ENCODE measurements at regions of chr4 and their contacts with region 1.

Region 1: DNA sequence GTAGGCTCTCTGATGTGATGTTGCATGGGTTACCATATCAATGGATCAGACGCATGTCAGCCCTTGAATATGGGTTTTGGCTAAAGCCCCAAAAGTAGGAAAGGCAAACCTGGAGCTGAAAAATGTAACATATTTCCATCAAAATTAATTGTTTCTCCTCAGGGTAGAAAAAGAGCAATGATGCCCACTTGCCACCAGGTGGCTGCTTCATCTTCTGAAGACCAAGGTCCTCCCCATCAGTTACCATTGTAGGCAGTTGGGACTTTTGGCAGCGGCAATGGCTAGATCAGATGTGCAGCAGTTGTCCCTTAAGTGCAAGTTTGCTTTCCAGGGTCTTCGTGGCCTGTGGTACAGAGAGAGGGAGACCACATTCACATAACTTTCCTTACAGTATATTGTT is 118.2 kb downstream of the NAF1 start:
- DNase-seq: peak; percentile 34
- ATAC-seq: peak; percentile 77
- H3K4me3 ChIP-seq: no peak overlapping the region
- H3K27ac ChIP-seq: no peak overlapping the region
- H3K4me1 ChIP-seq: no peaks in the 10 kb centered on the region
- H3K27me3 ChIP-seq: no peaks in the 10 kb centered on the region
- CTCF ChIP-seq: peak; percentile 55 to 63 (median 61); a peak in 5 of 6 replicates
- POLR2A ChIP-seq: no peak
- RAD21 ChIP-seq: peak; percentile 58

Region 2: GRCh38 chr4:162683659-162684370 is 364.6 kb before region 1 on chr4:
- CTCF ChIA-PET with region 1: no interaction called
- POLR2A ChIA-PET with region 1: no interaction called
- RAD21 ChIA-PET with region 1: no interaction called
- intact Hi-C with region 1: no loop called
- DNase-seq: no peak
- ATAC-seq: no peak
- H3K4me3 ChIP-seq: no peak overlapping the region
- H3K27ac ChIP-seq: no peak overlapping the region
- H3K4me1 ChIP-seq: no peaks in the 10 kb centered on the region
- H3K27me3 ChIP-seq: no peaks in the 10 kb centered on the region
- CTCF ChIP-seq: no peak
- POLR2A ChIP-seq: no peak
- RAD21 ChIP-seq: no peak

Region 3: GRCh38 chr4:163191999-163192398 is 143.6 kb after region 1 on chr4:
- CTCF ChIA-PET with region 1: interaction called, 6 read pairs
- POLR2A ChIA-PET with region 1: no interaction called
- RAD21 ChIA-PET with region 1: interaction called in 1 of 2 experiments, 3 read pairs
- intact Hi-C with region 1: loop called (anchors 1 kb)
- DNase-seq: peak; percentile 31
- ATAC-seq: peak; percentile 93
- H3K4me3 ChIP-seq: no peak overlapping the region
- H3K27ac ChIP-seq: no peak overlapping the region
- H3K4me1 ChIP-seq: no peaks in the 10 kb centered on the region
- H3K27me3 ChIP-seq: no peaks in the 10 kb centered on the region
- CTCF ChIP-seq: peak; percentile 60 to 82 (median 63); a peak in 5 of 6 replicates
- POLR2A ChIP-seq: no peak
- RAD21 ChIP-seq: peak; percentile 81

Region 4: DNA sequence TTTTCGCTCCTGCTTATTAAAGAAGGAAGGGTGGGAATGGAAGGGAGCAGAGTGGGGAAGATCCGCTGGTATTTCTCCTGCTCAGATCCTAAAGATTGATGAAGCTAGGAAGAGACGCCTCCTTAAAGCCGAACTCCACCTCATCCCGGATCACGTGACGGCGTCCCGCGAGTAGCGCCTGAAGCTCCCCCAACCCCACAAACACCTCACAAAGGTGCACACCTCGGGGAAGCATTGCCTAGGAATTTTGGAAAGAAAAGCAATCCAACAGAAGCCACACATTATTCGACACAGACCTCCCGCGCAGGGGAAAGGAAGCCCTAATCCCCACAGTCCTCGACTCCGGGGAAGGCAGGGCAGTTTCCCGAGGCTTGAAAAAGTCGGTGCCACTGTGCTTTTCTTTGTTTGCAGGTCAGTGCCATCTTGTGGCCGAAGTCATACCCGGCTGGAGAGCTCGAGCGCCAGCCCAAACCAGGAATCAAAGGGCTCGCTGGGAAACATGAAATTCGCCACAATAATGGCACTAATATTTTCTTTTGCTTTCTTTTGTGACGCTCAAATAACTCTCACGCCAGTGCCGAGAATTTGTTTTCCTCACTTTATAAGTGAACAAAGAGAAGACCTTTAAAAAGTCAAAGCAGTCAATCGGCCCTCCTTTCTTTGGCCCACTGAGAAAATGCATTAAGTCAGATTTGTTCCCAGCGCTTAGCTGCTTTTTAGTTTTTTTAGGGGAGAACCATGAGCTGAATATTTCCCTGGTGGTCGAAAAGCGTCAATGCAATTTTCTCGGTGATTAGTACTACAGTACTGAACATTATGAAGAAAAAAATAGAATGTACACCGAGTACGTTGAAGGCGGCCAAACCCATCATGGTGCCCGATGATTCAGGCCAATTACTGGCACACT is 284.3 kb after region 1 on chr4 and contains the start of gene NPY1R:
- CTCF ChIA-PET with region 1: no interaction called
- POLR2A ChIA-PET with region 1: no interaction called
- RAD21 ChIA-PET with region 1: no interaction called
- intact Hi-C with region 1: loop called (anchors 1 kb)
- DNase-seq: peak; percentile 34
- ATAC-seq: peak; percentile 90
- H3K4me3 ChIP-seq: peak within 1 kb of the TSS; percentile 17 to 37; a peak in 3 of 4 replicates
- H3K27ac ChIP-seq: no peak within 1 kb of the TSS
- H3K4me1 ChIP-seq: no peaks in the 10 kb centered on the region; a peak in 1 of 4 replicates
- H3K27me3 ChIP-seq: no peaks in the 10 kb centered on the region
- CTCF ChIP-seq: peak; percentile 34 to 62 (median 61); a peak in 5 of 6 replicates
- POLR2A ChIP-seq: no peak
- RAD21 ChIP-seq: peak; percentile 62
- total RNA-seq, gene NPY1R: 0.39 TPM